ENCODE measurements at regions of chr6 and their contacts with region 1.

Region 1: GRCh38 chr6:27608916-27609883 is 136.3 kb upstream of the ZNF184 start:
- DNase-seq: peak; percentile 30
- H3K4me3 Mint-ChIP-seq: no peak overlapping the region
- H3K27ac Mint-ChIP-seq: no peak overlapping the region
- H3K4me1 Mint-ChIP-seq: peaks cover 14% of the 10 kb centered on the region
- H3K27me3 Mint-ChIP-seq: peaks cover 58% of the 10 kb centered on the region

Region 2: DNA sequence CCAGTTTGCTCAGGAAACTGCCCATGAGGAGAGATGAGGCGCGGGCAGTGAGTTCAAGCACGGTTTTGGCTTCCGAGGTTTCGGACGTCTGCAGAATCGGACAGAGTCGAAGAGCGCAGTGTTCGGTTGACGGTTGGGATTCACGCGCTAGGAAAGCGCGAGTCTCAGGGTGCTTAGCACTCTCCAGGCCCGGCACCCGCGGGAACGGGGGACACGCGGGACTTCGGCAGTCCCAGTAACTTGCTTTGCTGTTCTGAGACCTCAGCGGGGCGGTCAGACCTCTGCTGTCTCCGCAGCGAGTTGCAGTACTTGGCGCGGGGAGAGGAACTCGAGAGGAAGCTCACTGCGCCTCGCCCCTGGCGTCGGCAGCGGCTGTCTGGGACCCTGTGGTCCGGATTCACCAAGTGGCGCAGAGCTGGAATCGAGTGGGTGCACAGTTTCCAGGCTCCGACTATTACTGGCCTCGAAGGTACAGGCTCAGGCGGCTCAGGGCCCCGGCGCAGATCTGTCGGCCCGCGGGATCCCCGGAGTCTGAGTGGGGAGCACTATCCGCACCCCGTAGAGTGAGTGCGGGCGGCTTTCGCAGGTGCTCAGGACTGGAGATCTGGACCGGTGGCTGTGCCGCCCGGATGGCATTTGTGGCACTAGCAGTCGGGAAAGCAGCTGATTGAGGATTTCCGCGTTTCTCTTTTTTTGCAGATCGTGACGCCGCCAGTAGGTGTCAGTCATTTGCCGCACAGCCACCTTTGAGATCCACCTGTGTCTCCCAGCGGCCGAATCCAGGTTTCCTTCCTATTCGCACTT is 296.9 kb before region 1 on chr6 and contains the start of gene POM121L2:
- CTCF ChIA-PET with region 1: interaction called, 10 read pairs
- DNase-seq: peak; percentile 77
- H3K4me3 Mint-ChIP-seq: peak within 1 kb of the TSS; percentile 73
- H3K27ac Mint-ChIP-seq: no peak within 1 kb of the TSS
- H3K4me1 Mint-ChIP-seq: peaks cover 12% of the 10 kb centered on the region
- H3K27me3 Mint-ChIP-seq: peaks cover 60% of the 10 kb centered on the region

Region 3: GRCh38 chr6:27553123-27553904 is 55.9 kb before region 1 on chr6:
- CTCF ChIA-PET with region 1: no interaction called
- DNase-seq: no peak
- H3K4me3 Mint-ChIP-seq: peak overlapping the region; percentile 40
- H3K27ac Mint-ChIP-seq: peak overlapping the region; percentile 67
- H3K4me1 Mint-ChIP-seq: peaks cover 20% of the 10 kb centered on the region
- H3K27me3 Mint-ChIP-seq: peaks cover 81% of the 10 kb centered on the region

Region 4: DNA sequence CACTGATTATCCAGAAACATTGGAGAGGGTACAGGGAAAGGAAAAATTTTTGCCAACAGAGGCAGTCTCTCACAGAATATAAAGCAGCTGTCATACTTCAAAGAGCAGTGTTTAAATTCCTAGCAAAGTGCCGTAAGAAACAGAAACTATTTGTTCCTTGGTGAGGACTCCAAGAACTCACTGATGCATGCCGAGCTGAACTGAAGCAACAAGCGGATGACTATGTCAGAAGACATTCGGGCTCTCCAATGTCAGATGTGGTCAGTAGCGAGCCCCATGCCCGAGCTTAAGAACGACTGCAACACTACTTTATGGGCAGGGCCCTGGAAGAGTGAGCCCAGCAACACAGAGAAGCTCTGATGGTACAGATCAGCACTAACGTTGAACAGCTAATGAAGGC is 402.5 kb after region 1 on chr6:
- CTCF ChIA-PET with region 1: no interaction called
- DNase-seq: no peak
- H3K4me3 Mint-ChIP-seq: no peak overlapping the region
- H3K27ac Mint-ChIP-seq: no peak overlapping the region
- H3K4me1 Mint-ChIP-seq: peaks cover 10% of the 10 kb centered on the region
- H3K27me3 Mint-ChIP-seq: peaks cover 5% of the 10 kb centered on the region